MCF 10A (cell line): ENCODE measurements at regions of chrX and their contacts with region 1.

Region 1: GRCh38 chrX:13825178-13825762 is 8.4 kb upstream of the GPM6B start:
- DNase-seq: no peak
- H3K4me3 Mint-ChIP-seq: no peak overlapping the region
- H3K27ac Mint-ChIP-seq: no peak overlapping the region
- H3K4me1 Mint-ChIP-seq: peaks cover 31% of the 10 kb centered on the region
- H3K27me3 Mint-ChIP-seq: peaks cover 55% of the 10 kb centered on the region
- CTCF ChIP-seq: no peak

Region 2: DNA sequence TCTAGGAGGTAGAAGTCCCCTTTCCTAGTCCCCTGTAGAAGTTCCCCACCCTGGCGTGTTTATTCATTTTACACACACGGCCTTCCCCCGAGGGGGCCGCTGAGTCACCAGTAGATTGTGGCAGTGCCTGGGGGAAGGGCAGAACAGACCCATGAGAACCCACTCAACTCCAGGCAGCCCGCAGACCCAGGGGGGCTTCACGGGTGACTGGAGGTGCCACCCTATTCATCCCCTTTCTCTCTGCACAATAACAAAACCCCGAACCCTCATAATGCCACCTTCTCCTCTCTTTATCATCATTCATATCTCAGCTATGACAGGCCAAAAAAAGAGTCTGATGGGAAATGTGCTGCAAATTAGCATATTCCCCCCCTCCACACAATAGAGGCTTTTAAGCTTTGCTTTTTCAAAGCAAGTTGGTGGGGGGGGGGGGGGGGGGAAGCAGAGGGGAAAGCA is 12.0 kb after region 1 on chrX:
- CTCF ChIA-PET with region 1: interaction called, 10 read pairs
- POLR2A ChIA-PET with region 1: interaction called, 55 read pairs
- intact Hi-C with region 1: no loop called
- DNase-seq: no peak
- H3K4me3 Mint-ChIP-seq: no peak overlapping the region
- H3K27ac Mint-ChIP-seq: peak overlapping the region; percentile 29
- H3K4me1 Mint-ChIP-seq: peaks cover 7% of the 10 kb centered on the region
- H3K27me3 Mint-ChIP-seq: peaks cover 26% of the 10 kb centered on the region
- CTCF ChIP-seq: no peak

Region 3: GRCh38 chrX:13845721-13846378 is 20.6 kb after region 1 on chrX:
- CTCF ChIA-PET with region 1: interaction called, 3 read pairs
- POLR2A ChIA-PET with region 1: interaction called, 55 read pairs
- intact Hi-C with region 1: no loop called
- DNase-seq: peak; percentile 95
- H3K4me3 Mint-ChIP-seq: no peak overlapping the region
- H3K27ac Mint-ChIP-seq: peak overlapping the region; percentile 43
- H3K4me1 Mint-ChIP-seq: peaks cover 7% of the 10 kb centered on the region
- H3K27me3 Mint-ChIP-seq: peaks cover 48% of the 10 kb centered on the region
- CTCF ChIP-seq: no peak

Region 4: DNA sequence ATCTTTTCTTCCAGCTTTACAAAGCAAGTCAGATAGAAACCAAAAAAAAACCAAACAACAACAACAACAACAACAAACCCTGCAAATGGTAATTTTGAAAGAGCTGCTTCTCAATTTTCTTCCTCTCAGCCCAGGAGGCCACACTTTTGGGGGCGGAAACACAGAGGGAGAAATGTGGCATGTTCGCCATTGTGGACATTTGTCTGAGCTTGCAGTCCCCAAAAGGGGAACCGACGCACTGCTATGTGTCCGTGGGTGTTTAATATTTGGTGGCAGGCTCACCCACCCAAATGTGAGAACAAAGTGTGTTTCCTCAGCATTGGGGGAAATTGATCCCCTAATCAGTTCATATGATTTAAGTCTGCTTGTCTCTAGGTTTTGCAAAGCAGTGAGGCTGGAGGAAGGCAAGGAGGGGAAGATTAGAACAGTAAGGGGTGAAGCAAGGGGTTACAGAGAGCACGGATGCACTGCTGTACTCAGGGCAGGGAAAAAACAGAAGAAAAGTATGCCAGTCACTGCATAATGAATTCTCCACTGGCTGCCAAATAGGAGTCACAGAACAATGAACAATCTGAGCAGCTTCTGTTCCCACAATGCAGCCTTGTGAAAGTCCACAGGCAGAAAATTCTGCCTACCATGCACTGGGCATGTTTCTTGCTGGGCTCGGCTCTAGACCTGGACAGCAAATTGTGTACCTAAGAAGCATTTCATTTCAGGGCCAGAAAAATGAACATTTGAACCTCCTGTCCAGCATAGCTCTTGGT is 66.3 kb after region 1 on chrX:
- CTCF ChIA-PET with region 1: interaction called, 5 read pairs
- POLR2A ChIA-PET with region 1: interaction called, 12 read pairs
- intact Hi-C with region 1: loop called (anchors 10 kb)
- DNase-seq: no peak
- H3K4me3 Mint-ChIP-seq: peak overlapping the region; percentile 5
- H3K27ac Mint-ChIP-seq: no peak overlapping the region
- H3K4me1 Mint-ChIP-seq: peaks cover 11% of the 10 kb centered on the region
- H3K27me3 Mint-ChIP-seq: peaks cover 54% of the 10 kb centered on the region
- CTCF ChIP-seq: no peak

Region 5: DNA sequence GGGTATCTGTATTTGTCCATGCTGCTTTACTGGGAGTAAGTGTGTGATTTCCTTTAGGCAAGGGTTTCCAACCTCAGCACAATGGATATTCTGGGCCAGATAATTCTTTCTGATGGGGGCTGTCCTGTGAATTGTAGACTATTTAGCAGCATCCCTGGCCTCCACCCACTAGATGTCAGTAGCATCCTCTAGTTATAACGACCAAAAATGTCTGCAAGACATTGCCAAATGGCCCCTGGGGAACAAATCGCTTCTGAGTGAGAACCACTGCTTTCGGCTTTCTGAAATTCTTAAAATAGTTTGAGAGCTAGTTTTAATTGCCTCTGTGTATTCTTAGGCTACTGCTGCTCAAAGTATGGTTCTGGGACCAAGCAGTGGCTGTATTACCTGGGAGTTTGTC is 72.8 kb after region 1 on chrX:
- CTCF ChIA-PET with region 1: interaction called, 5 read pairs
- POLR2A ChIA-PET with region 1: interaction called, 12 read pairs
- intact Hi-C with region 1: loop called (anchors 10 kb)
- DNase-seq: peak; percentile 62
- H3K4me3 Mint-ChIP-seq: no peak overlapping the region
- H3K27ac Mint-ChIP-seq: peak overlapping the region; percentile 83
- H3K4me1 Mint-ChIP-seq: peaks cover 34% of the 10 kb centered on the region
- H3K27me3 Mint-ChIP-seq: peaks cover 13% of the 10 kb centered on the region
- CTCF ChIP-seq: no peak

Region 6: GRCh38 chrX:13938051-13938828 is 113.0 kb after region 1 on chrX:
- CTCF ChIA-PET with region 1: no interaction called
- POLR2A ChIA-PET with region 1: interaction called, 13 read pairs
- intact Hi-C with region 1: no loop called
- DNase-seq: peak; percentile 40
- H3K4me3 Mint-ChIP-seq: peak overlapping the region; percentile 81
- H3K27ac Mint-ChIP-seq: peak overlapping the region; percentile 79
- H3K4me1 Mint-ChIP-seq: peaks cover 5% of the 10 kb centered on the region
- H3K27me3 Mint-ChIP-seq: peaks cover 56% of the 10 kb centered on the region
- CTCF ChIP-seq: no peak